GM12878 (cell line): ENCODE measurements at regions of chr5 and their contacts with region 1.

Region 1: DNA sequence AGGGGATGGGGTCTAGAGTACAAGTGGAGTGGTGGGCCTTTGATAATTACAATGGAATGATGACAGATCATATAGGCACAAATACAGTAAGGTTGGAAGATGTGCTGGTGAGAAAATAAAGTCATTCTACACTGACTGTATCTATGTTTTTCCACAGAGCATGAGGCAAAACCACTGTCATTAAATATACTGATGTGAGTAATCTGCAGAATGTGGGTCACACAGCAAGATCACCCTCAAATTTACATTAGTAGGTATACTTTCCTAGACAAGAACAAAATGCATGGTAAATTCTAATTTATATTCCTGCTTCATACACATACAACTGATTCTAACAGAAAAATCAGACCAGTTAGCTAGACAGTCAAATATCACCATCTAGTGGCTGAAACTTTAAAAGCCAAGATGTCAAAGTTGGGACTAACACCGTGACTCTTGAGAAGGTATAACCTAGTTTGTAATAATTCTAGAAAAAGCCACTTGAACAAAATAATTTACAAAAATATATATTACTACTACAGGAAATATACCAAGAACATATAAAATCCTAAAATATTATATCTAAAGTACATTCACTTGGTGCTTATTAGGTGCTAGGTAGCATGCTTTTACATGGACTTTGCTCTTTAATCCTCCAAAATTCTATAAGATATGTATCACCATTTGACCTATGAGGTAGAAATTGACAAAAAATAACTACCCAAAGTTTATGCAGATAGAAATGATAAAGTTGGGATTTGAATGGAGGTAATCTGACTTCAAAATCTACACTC is 19.5 kb downstream of the TTC33 start:
- DNase-seq: peak; percentile 37
- ATAC-seq: peak; percentile 89
- H3K4me3 ChIP-seq: no peak overlapping the region
- H3K27ac ChIP-seq: no peak overlapping the region
- H3K4me1 ChIP-seq: no peaks in the 10 kb centered on the region
- H3K27me3 ChIP-seq: no peaks in the 10 kb centered on the region
- CTCF ChIP-seq: peak; percentile 62 to 76 (median 63)
- EP300 ChIP-seq: no peak
- POLR2A ChIP-seq: no peak
- RAD21 ChIP-seq: peak; percentile 78

Region 2: GRCh38 chr5:39578887-39579497 is 1157.3 kb before region 1 on chr5:
- CTCF ChIA-PET with region 1: interaction called, 4 read pairs
- POLR2A ChIA-PET with region 1: no interaction called
- RAD21 ChIA-PET with region 1: no interaction called
- SMC1A ChIA-PET with region 1: interaction called, 3 read pairs
- in situ Hi-C with region 1: no loop called
- intact Hi-C with region 1: loop called (anchors 5 kb)
- DNase-seq: no peak
- ATAC-seq: no peak
- H3K4me3 ChIP-seq: no peak overlapping the region
- H3K27ac ChIP-seq: no peak overlapping the region
- H3K4me1 ChIP-seq: no peaks in the 10 kb centered on the region
- H3K27me3 ChIP-seq: 0 out of 4 replicates have a peak, but pooled peaks cover 0 to 2% of the 10 kb centered on the region in 2 experiments
- CTCF ChIP-seq: peak; percentile 33 to 43 (median 43); a peak in 4 of 6 replicates
- EP300 ChIP-seq: no peak
- POLR2A ChIP-seq: no peak
- RAD21 ChIP-seq: peak; percentile 48

Region 3: GRCh38 chr5:40798012-40798855 is 61.9 kb after region 1 on chr5 and contains the start of gene PRKAA1:
- CTCF ChIA-PET with region 1: no interaction called
- POLR2A ChIA-PET with region 1: no interaction called
- RAD21 ChIA-PET with region 1: no interaction called
- SMC1A ChIA-PET with region 1: no interaction called
- in situ Hi-C with region 1: no loop called
- intact Hi-C with region 1: no loop called
- DNase-seq: peak; percentile 20
- ATAC-seq: peak; percentile 95
- H3K4me3 ChIP-seq: peak within 1 kb of the TSS; percentile 84
- H3K27ac ChIP-seq: no peak within 1 kb of the TSS; the same call in none of the 2 replicates
- H3K4me1 ChIP-seq: no peaks in the 10 kb centered on the region
- H3K27me3 ChIP-seq: peaks cover 0 to 1% of the 10 kb centered on the region in 2 experiments; a peak in 1 of 4 replicates
- CTCF ChIP-seq: peak; percentile 39 to 74 (median 64); a peak in 5 of 6 replicates
- EP300 ChIP-seq: no peak
- POLR2A ChIP-seq: peak; percentile 88
- RAD21 ChIP-seq: no peak
- polyA plus RNA-seq, gene PRKAA1: 13.6 to 13.8 TPM